ENCODE measurements at regions of chr1 and their contacts with region 1.

Region 1: DNA sequence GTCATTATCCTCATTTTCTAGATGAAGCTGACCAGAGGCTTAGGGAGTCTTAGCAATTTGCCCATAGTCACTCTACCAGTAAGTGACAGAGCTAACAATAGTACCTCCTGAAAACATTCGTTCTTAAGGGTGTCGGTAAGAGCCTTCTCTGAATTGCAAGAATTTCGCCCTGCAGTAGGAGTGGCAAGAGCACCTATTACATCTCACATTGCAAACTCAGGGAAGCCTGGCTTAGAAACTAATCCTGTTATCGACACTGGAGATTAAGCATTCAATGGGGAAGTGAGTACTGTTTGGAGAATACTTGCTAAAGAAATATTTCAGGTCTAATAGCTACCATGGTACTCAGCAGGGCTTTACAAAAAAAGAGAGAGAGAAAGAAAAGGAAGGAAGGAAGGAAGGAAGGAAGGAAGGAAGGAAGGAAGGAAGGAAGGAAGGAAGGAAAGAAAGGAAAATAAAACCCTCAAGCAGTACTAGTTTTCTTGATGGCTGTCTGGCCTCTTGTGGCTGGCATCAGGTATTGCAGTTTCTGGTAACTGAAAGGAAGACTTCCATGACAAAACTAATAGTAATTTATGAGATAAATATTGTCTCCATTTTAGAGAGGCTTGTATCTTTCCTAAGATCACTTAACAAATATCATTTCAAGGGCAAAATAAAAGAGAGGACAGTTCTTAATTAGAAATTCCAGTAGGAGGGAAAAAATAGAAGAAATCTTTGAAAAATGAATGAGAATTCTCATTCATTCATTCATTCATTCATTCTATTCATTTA is 10.4 kb downstream of the C1orf226 start:
- DNase-seq: peak; percentile 43
- H3K4me3 ChIP-seq: no peak overlapping the region
- H3K27ac ChIP-seq: no peak overlapping the region
- H3K4me1 ChIP-seq: no peaks in the 10 kb centered on the region
- H3K27me3 ChIP-seq: peaks cover 0 to 6% of the 10 kb centered on the region in 2 experiments
- CTCF ChIP-seq: peak; percentile 64 to 70
- POLR2A ChIP-seq: no peak

Region 2: GRCh38 chr1:162276493-162276892 is 115.5 kb before region 1 on chr1:
- CTCF ChIA-PET with region 1: interaction called, 5 read pairs
- POLR2A ChIA-PET with region 1: no interaction called
- dilution Hi-C with region 1: no loop called
- intact Hi-C with region 1: loop called (anchors 1 kb)
- DNase-seq: peak; percentile 51
- H3K4me3 ChIP-seq: no peak overlapping the region
- H3K27ac ChIP-seq: no peak overlapping the region
- H3K4me1 ChIP-seq: no peaks in the 10 kb centered on the region
- H3K27me3 ChIP-seq: no peaks in the 10 kb centered on the region
- CTCF ChIP-seq: peak; percentile 10 to 22
- POLR2A ChIP-seq: no peak

Region 3: DNA sequence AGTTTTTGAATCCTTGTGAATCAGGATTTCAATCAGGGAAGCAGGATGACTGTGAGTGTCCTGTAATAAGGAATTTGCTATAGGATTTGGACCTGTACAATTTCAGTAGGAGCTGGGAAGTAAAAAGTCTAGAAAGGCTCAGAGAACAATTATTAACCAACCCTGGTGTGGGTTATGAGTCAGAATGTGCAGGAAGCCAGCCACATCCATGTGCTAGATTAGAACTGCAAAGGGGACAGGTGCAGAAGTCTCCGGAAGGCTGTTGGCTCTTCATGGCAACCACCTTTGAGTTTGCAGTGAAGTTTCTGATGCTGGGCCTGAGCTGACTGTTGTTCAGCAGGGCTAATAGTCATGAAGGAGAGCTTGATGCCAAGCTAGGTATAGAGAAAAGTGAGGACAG is 86.0 kb before region 1 on chr1:
- CTCF ChIA-PET with region 1: no interaction called
- POLR2A ChIA-PET with region 1: no interaction called
- dilution Hi-C with region 1: no loop called
- intact Hi-C with region 1: loop called (anchors 5 kb)
- DNase-seq: peak; percentile 80
- H3K4me3 ChIP-seq: no peak overlapping the region
- H3K27ac ChIP-seq: peak overlapping the region; percentile 61
- H3K4me1 ChIP-seq: peaks cover 44% of the 10 kb centered on the region
- H3K27me3 ChIP-seq: no peaks in the 10 kb centered on the region
- CTCF ChIP-seq: no peak
- POLR2A ChIP-seq: no peak

Region 4: DNA sequence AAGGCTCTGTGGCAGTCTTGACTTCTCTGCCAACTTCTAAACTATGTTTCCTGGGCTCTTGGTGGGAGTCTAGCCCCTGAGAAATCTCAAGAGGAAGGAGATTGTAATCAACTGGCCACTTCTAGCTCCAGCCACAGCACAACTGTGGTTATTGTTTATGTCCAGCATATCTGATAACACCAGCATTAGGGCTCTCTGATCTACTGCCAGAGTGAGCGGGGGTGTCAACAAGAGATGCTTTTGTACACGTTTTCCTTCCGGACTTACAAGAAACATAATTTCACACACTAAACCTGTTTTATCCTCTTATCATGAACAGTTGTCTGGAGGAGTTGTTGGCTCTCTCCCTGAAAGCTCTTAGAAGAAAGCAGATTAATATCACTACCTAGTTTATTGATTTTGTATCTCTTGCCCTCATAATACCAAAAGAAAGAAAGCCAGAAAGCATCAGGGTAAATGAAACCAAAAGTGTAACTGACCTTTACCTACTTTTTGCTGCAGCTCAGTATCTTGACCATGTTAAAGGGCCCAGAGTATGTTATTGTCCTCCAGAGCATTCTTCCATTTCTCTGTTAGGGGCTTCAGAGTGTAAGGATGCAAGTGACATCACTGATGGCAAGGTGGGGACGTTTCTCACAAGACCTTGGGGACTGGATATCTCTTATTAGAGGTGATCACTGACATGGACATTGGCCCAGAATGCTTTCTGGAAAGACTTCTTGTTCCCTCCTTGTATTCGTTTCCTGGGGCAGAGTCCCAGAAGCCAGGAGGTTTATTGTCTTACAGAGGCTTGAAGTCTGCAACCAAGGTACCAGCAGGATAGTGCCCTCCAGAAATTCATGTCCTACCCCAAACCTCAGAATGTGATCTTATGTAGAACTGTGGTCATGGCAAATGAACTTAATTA is 29.5 kb after region 1 on chr1:
- CTCF ChIA-PET with region 1: no interaction called
- POLR2A ChIA-PET with region 1: no interaction called
- dilution Hi-C with region 1: no loop called
- intact Hi-C with region 1: no loop called
- DNase-seq: peak; percentile 15
- H3K4me3 ChIP-seq: no peak overlapping the region
- H3K27ac ChIP-seq: no peak overlapping the region
- H3K4me1 ChIP-seq: no peaks in the 10 kb centered on the region
- H3K27me3 ChIP-seq: no peaks in the 10 kb centered on the region
- CTCF ChIP-seq: no peak
- POLR2A ChIP-seq: no peak

Region 5: GRCh38 chr1:162456324-162456723 is 64.3 kb after region 1 on chr1:
- CTCF ChIA-PET with region 1: no interaction called
- POLR2A ChIA-PET with region 1: no interaction called
- dilution Hi-C with region 1: no loop called
- intact Hi-C with region 1: no loop called
- DNase-seq: no peak
- H3K4me3 ChIP-seq: no peak overlapping the region
- H3K27ac ChIP-seq: no peak overlapping the region
- H3K4me1 ChIP-seq: no peaks in the 10 kb centered on the region
- H3K27me3 ChIP-seq: no peaks in the 10 kb centered on the region
- CTCF ChIP-seq: no peak
- POLR2A ChIP-seq: no peak

Region 6: GRCh38 chr1:162466797-162467196 is 74.8 kb after region 1 on chr1:
- CTCF ChIA-PET with region 1: no interaction called
- POLR2A ChIA-PET with region 1: no interaction called
- dilution Hi-C with region 1: no loop called
- intact Hi-C with region 1: no loop called
- DNase-seq: no peak
- H3K4me3 ChIP-seq: no peak overlapping the region
- H3K27ac ChIP-seq: no peak overlapping the region
- H3K4me1 ChIP-seq: no peaks in the 10 kb centered on the region
- H3K27me3 ChIP-seq: peaks cover 0 to 5% of the 10 kb centered on the region in 2 experiments
- CTCF ChIP-seq: no peak
- POLR2A ChIP-seq: no peak

Region 7: DNA sequence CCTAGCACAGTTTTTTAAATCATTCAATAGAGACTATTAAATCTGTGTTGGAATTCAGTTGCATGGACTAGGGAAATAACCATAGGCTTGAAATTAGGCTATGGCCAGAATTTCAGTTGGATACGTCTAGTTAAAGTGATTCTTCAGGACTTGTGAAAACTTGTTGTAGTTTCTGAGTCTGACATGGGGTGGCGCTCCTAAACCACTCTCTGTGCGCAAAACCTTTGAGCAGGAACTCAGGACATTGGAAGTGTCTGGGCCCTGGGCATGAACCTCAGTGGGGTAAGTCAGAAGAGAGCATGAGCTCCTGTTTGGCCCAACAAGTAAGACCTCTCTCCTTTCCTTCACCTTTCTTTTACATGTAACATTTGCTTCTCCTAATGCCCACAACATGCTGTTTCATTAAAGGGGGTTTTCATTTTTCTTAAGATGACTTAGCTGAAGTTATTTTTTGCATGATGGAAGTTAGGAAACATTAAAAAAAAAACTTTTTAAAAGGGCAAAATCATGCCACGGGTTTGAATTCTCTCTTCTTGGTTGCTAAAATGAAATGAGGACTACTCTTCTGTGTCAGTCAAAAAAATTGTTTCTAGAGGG is 486.1 kb after region 1 on chr1:
- CTCF ChIA-PET with region 1: no interaction called
- POLR2A ChIA-PET with region 1: no interaction called
- dilution Hi-C with region 1: no loop called
- intact Hi-C with region 1: no loop called
- DNase-seq: peak; percentile 85
- H3K4me3 ChIP-seq: no peak overlapping the region
- H3K27ac ChIP-seq: no peak overlapping the region
- H3K4me1 ChIP-seq: peaks cover 24% of the 10 kb centered on the region
- H3K27me3 ChIP-seq: no peaks in the 10 kb centered on the region
- CTCF ChIP-seq: peak; percentile 71 to 80
- POLR2A ChIP-seq: no peak